ENCODE measurements at regions of chr12 and their contacts with region 1.

Region 1: GRCh38 chr12:68899251-68899771 is 33.7 kb downstream of the CPM start:
- DNase-seq: peak; percentile 69 to 84 (median 79)
- ATAC-seq: peak; percentile 93 to 94 (median 94)
- H3K4me3 ChIP-seq: no peak overlapping the region
- H3K27ac ChIP-seq: peak overlapping the region in 2 of 4 donors; percentile 1 to 37
- H3K4me1 ChIP-seq: peaks cover 13 to 22% (median 18%) of the 10 kb centered on the region in 3 donors
- H3K27me3 ChIP-seq: no peaks in the 10 kb centered on the region
- CTCF ChIP-seq: peak in 3 of 4 donors; percentile 21 to 74 (median 61)

Region 2: GRCh38 chr12:69052613-69053408 is 153.5 kb after region 1 on chr12:
- intact Hi-C with region 1: loop called in 1 of 3 experiments (anchors 10 kb)
- DNase-seq: peak in 3 of 6 donors; percentile 35 to 60 (median 53)
- ATAC-seq: peak; percentile 80 to 94 (median 90)
- H3K4me3 ChIP-seq: no peak overlapping the region
- H3K27ac ChIP-seq: peak overlapping the region; percentile 1 to 73 (median 48)
- H3K4me1 ChIP-seq: peaks cover 11 to 17% (median 17%) of the 10 kb centered on the region in 3 donors
- H3K27me3 ChIP-seq: no peaks in the 10 kb centered on the region
- CTCF ChIP-seq: no peak

Measured in pancreas (tissue), 10 donors.